Posterior cingulate gyrus (tissue), 11 donors: ENCODE measurements at regions of chr5 and their contacts with region 1.

Region 1: DNA sequence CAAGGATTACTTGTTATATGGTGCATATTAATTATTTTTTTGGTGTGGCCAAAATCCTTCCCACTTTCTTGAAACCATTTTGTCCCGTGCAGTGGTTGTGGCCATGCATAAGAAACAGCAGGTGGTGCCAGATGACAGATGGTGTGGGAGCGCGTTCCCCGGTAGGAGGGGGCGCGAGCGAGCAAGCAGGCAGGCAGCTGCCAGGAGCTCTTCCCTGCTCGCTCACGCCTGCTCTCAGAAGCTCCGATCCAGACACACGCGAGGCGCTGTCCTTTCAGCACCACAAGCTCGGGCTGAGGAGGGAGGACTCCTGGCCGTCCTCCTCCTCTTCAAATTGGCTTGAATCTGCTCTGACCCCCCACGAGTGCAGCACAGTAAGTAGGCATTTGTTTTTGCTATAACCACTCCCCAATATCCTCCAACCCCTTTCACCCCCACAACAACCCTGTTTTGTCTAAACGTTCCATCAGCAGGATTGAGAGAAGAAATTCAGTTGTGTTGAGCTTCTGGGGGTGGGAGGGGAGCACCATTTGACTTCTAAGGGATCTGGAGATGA is at the start of gene NSG2:
- DNase-seq: peak; percentile 78 to 99 (median 91)

Region 2: GRCh38 chr5:173697931-173698579 is 347.5 kb before region 1 on chr5:
- intact Hi-C with region 1: no loop called
- DNase-seq: no peak

Region 3: DNA sequence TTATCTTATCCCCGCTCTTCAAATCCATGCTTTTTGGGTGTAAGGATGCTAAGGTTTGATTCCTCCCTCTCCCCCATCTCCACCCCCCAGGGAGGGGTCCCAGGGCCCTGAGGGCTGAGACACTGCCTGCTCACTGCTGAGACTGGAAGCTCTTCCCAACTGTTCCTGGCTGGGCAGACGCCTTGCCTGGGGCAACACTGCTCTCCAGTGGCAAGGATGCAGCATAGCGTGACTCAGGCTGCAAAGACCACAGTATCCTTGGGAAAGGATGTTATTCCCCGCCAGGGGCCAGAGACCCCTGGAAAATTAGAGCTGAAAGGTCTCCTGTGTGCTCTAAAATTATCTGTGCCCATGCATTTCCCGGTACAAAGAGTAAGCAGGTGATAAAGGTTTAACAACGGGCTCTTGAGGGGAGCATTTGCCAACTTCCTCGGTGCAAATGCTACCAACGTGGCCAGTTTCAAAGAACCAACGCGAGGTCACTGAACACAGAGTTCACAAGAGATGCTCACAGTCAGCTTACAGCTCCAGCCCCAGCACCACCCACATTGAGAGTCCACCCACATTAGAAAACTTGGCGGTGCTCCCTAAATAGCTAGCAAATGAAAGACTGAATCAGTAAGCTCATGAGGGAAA is 271.8 kb after region 1 on chr5:
- intact Hi-C with region 1: loop called (anchors 1 kb)
- DNase-seq: peak; percentile 46 to 96 (median 69)